CD8-positive, alpha-beta memory T cell (primary cell): ENCODE measurements at regions of chr5 and their contacts with region 1.

Region 1: GRCh38 chr5:138128334-138128733 is 10.9 kb downstream of the NME5 start:
- DNase-seq: no peak
- H3K4me3 ChIP-seq: no peak overlapping the region
- H3K4me3 Mint-ChIP-seq: no peak overlapping the region
- H3K27ac ChIP-seq: no peak overlapping the region
- H3K27ac Mint-ChIP-seq: no peak overlapping the region
- H3K4me1 ChIP-seq: no peaks in the 10 kb centered on the region
- H3K4me1 Mint-ChIP-seq: peaks cover 0 to 2% (median 0%) of the 10 kb centered on the region in 3 donors
- H3K27me3 ChIP-seq: no peaks in the 10 kb centered on the region
- H3K27me3 Mint-ChIP-seq: peaks cover 3 to 13% of the 10 kb centered on the region in 2 donors

Region 2: DNA sequence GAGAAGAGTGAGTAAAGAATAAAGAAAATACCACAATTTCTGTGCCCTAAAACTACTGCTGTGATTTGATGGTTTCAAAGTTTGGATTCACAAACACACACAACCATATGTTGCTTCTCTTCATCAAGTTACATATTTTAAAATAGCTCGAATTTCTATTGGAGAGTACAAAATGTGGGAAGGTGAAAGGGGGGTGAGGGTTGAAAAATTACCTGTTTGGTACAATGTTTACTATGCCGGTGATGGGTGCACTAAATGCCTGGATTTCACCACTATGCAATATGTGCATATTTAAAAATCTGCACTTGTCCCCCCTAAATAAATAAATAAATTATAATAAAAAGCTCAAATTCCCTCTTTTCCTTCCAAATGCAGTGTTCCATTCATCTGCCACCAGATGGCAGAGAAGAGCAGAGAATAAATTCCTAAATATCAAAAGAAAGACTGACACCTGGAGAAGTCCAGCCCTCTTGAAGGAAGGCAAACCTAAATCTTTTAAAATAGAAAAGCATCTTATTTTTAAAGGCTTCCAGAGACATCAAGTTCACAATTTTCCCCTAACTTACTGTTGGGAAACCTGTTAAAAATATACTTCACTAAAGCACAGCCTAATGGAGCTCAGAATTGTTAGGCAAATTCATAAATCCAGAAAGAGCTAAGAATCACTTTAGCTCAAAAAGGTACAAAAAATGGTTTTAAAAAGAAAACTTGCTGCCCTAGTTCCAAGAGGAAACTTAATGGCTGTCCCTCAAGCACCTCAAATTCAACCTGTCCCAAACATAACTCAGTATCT is 349.4 kb before region 1 on chr5:
- CTCF ChIA-PET with region 1: interaction called, 23 read pairs
- POLR2A ChIA-PET with region 1: no interaction called
- DNase-seq: peak in 1 of 5 donors; percentile 3
- H3K4me3 ChIP-seq: no peak overlapping the region
- H3K4me3 Mint-ChIP-seq: no peak overlapping the region
- H3K27ac ChIP-seq: no peak overlapping the region
- H3K27ac Mint-ChIP-seq: no peak overlapping the region
- H3K4me1 ChIP-seq: no peaks in the 10 kb centered on the region
- H3K4me1 Mint-ChIP-seq: no peaks in the 10 kb centered on the region
- H3K27me3 ChIP-seq: no peaks in the 10 kb centered on the region
- H3K27me3 Mint-ChIP-seq: peaks cover under 1 to 3% of the 10 kb centered on the region in 2 donors

Region 3: DNA sequence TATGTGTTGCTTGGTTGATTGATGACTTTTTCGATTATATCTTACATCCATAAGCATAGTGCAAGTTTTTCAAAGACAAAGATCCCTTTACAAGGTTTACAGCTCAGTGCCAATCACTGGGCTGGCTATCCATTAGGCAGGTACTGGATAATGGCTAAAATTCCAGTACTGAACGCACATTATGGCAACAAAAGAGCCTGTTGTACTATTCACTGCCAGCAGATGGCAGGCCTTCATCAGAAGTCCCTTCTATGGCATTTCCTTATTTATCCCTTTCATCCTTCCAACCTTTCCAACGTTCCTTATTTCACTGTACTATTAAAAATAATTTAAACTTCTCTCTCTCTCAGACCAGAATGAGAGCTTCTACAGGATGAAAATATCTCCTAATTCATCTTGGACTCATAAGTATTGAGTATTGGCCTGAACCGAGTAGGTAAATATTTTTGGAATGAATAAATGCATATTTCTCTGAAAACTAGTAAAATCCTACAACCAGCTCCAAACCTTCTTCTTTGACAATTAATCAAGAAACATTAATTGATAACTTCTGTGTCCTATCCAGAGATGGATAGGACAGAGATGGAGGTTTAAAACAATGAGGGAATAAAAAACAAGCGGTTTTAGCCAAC is 51.2 kb before region 1 on chr5:
- CTCF ChIA-PET with region 1: interaction called, 82 read pairs
- POLR2A ChIA-PET with region 1: interaction called, 4 read pairs
- DNase-seq: peak in 4 of 5 donors; percentile 24 to 64 (median 34)
- H3K4me3 ChIP-seq: no peak overlapping the region
- H3K4me3 Mint-ChIP-seq: peak overlapping the region in 1 of 7 donors; percentile 48
- H3K27ac ChIP-seq: no peak overlapping the region
- H3K27ac Mint-ChIP-seq: no peak overlapping the region
- H3K4me1 ChIP-seq: no peaks in the 10 kb centered on the region
- H3K4me1 Mint-ChIP-seq: peaks cover 0 to 13% (median 3%) of the 10 kb centered on the region in 3 donors
- H3K27me3 ChIP-seq: no peaks in the 10 kb centered on the region
- H3K27me3 Mint-ChIP-seq: no peaks in the 10 kb centered on the region